PC-3 (cell line): ENCODE measurements at regions of chr17 and their contacts with region 1.

Region 1: DNA sequence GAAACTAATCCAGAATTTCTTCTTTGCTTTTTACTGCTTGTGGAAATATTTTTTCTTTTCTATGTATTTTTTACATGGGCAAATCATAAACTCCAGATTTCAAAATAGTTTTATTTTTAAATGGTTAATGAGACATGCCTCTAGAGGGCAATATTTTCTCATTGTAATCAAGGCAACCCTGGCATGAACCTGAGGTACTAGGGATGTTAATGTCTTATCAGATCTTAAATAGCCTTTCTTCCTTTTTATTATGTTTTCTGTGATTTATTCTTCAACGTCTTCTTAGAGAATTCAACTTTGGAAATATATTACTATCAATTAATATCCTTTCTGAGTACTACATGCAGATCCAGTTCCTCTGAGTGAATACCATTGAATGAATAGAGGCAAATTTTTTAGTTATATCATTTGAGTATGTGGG is 324.7 kb downstream of the BCAS3 start:
- DNase-seq: peak; percentile 81
- ATAC-seq: peak; percentile 42; the same call in 1 of the 2 replicates
- H3K4me3 ChIP-seq: no peak overlapping the region
- H3K27ac ChIP-seq: no peak overlapping the region
- H3K4me1 ChIP-seq: no peaks in the 10 kb centered on the region
- H3K27me3 ChIP-seq: no peaks in the 10 kb centered on the region
- CTCF ChIP-seq: peak; percentile 87

Region 2: DNA sequence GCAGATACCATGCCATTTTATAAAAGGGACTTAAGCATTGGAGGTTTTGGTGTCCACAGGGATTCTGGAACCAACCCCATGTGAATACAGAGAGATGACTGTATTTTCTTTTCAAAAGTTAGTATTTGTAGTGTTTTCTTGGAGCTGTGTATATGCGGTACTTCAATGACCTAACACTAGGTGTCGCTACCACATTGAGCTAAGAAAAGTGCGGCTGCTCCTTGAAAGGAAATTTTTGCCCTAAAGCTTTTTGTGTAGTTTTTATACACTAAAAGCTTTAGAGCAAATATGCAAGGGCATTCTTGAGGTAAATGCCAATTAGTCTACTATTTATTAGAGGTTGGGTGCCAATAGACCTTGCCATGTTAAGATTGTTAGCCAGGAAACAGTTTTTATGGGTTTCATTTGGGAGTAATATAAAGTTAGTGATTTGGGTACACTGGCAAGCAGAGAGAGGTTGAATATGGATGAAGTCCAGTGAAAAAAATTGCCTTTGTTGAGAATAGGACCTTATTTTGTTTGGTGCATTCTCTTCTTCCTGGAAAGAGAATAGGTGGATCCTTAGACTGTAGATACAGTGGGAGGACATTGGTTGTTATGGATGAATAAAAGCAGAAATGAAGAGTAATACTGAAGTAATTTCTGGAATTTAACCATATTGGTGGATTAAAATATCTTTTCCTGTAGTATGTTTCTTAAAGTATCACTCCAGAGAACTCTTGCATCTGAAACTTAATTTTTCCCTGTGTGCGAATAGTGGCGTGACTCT is 281.4 kb before region 1 on chr17:
- CTCF ChIA-PET with region 1: interaction called, 9 read pairs
- POLR2A ChIA-PET with region 1: no interaction called
- intact Hi-C with region 1: loop called (anchors 2 kb)
- DNase-seq: peak; percentile 83
- ATAC-seq: peak; percentile 82
- H3K4me3 ChIP-seq: no peak overlapping the region
- H3K27ac ChIP-seq: no peak overlapping the region
- H3K4me1 ChIP-seq: no peaks in the 10 kb centered on the region; the same call in 1 of the 2 replicates
- H3K27me3 ChIP-seq: no peaks in the 10 kb centered on the region
- CTCF ChIP-seq: peak; percentile 99

Region 3: DNA sequence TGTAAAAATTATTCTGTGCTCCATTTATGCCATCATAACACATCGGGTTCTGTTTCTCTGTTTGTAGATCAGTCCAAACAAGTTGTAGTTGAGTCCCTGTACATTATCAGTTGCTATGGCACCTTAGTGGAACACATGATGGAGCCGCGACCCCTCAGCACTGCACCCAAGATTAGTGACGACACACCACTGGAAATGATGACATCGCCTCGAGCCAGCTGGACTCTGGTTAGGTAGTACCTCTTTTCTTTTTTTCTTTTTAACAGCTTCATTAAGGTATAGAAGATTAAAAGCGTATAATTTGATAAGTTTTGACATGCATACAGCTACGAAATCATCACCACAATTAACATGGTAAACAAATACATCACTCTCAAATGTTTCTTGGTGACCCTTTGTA is 35.5 kb after region 1 on chr17:
- CTCF ChIA-PET with region 1: no interaction called
- POLR2A ChIA-PET with region 1: no interaction called
- intact Hi-C with region 1: no loop called
- DNase-seq: no peak
- ATAC-seq: no peak
- H3K4me3 ChIP-seq: no peak overlapping the region
- H3K27ac ChIP-seq: no peak overlapping the region
- H3K4me1 ChIP-seq: no peaks in the 10 kb centered on the region
- H3K27me3 ChIP-seq: no peaks in the 10 kb centered on the region
- CTCF ChIP-seq: no peak

Region 4: DNA sequence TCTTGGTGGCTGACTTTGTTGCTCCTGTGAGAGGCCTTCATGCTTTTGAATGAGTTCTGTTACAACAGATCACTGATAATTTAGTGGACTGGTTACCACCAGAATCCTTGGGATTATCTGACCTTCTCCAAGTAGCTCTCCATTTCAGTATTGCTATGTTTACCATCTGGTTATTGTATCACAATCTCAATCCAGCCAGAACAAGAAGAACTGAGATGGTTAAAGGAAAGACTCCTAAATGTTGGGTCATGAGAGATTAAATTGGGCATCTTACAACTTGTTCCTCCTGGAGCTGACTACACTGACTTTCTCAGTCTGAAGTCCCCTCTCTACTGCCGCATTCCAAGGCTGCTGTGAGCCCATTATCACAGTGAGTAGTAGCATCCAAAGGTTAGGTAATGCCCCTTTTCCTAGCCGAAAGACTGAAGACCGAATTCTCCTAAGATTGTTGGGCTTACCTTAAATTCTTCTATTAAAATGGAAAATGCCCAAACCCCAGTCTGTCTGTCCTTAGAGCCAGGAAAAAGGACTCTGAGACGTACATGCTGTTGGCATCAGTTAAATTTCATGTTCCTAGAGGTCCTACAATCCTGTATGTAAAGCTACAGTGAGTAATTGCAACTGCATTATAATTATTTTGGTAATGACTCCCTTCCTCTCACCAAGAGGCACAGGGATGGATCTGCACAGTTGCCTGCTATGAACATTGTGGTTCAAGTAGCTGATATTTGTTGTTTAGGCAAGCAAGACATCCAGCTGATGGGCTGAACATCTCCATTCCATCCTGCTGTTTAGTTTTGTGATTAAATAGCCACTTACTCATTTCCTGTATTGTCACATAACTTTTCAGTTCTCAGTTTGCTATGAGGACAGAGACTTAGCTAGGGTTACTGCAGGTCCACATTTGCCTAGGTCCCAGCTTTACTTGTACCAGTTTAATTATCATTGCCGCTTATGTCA is 215.8 kb after region 1 on chr17:
- CTCF ChIA-PET with region 1: no interaction called
- POLR2A ChIA-PET with region 1: no interaction called
- intact Hi-C with region 1: no loop called
- DNase-seq: peak; percentile 65
- ATAC-seq: peak; percentile 98
- H3K4me3 ChIP-seq: no peak overlapping the region
- H3K27ac ChIP-seq: no peak overlapping the region
- H3K4me1 ChIP-seq: peaks cover 13% of the 10 kb centered on the region
- H3K27me3 ChIP-seq: no peaks in the 10 kb centered on the region
- CTCF ChIP-seq: no peak

Region 5: DNA sequence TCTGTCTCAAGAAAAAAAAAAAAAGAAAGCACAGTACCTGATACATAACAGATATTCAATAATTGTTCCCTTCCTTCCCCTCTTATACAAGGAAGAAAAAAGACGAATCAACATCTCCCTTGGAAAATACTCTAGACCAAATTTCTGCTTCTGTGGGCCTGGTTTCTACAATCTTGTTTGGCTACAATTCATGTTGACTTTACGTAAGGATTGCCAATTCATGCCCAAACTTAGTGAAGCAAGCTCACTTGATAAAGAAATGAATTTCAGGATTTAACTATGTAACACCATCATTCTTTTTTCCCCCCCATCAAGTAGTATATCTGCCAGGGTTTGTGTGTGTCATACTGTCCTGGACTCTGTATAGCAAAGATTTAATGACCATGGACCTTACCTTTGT is 263.1 kb after region 1 on chr17:
- CTCF ChIA-PET with region 1: no interaction called
- POLR2A ChIA-PET with region 1: no interaction called
- intact Hi-C with region 1: loop called (anchors 5 kb)
- DNase-seq: no peak
- ATAC-seq: no peak
- H3K4me3 ChIP-seq: no peak overlapping the region
- H3K27ac ChIP-seq: no peak overlapping the region
- H3K4me1 ChIP-seq: no peaks in the 10 kb centered on the region
- H3K27me3 ChIP-seq: no peaks in the 10 kb centered on the region
- CTCF ChIP-seq: no peak

Region 6: DNA sequence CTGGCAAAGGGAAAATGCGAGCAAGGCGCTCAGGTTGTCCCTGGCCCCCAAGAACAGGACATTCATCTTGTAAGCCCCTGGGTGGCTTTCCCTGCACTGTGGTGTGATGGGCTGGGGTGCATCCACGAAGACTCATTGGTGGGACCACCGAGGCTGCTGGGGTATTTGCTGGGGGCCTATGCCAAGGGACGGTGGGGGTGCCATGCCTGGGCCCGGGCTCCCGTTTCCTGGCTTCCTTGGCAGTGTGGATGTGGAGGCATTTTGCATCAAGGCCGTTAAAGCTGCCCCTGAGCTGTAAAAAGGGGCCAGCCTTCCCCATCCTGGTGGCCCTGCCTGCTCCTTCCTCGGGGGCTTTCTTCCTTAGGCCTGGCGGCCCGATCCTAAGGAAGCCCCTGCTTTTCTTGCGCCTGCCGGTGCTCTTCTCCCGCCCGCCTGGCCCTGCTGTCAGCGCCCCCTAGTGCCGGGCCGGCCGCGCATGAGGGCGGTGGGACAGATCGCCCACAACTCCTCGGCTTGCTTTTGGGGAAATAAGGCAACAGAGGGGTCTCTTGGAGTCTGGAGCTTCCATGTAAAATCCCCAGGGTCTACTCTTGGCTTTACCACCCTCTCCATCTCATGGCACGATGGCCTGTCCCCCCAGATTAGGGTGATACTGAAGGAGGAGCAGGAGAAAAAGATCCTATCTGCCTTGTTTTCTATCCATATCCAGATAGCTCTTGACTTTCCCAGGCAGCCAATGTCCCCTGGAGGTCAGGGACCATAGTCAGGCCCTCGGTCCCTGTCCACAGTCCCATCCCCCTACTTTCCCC is 387.5 kb after region 1 on chr17:
- CTCF ChIA-PET with region 1: no interaction called
- POLR2A ChIA-PET with region 1: no interaction called
- intact Hi-C with region 1: loop called (anchors 1 kb)
- DNase-seq: peak; percentile 69
- ATAC-seq: peak; percentile 78
- H3K4me3 ChIP-seq: no peak overlapping the region
- H3K27ac ChIP-seq: no peak overlapping the region
- H3K4me1 ChIP-seq: peaks cover 3% of the 10 kb centered on the region; the same call in 1 of the 2 replicates
- H3K27me3 ChIP-seq: no peaks in the 10 kb centered on the region
- CTCF ChIP-seq: peak; percentile 99

Region 7: DNA sequence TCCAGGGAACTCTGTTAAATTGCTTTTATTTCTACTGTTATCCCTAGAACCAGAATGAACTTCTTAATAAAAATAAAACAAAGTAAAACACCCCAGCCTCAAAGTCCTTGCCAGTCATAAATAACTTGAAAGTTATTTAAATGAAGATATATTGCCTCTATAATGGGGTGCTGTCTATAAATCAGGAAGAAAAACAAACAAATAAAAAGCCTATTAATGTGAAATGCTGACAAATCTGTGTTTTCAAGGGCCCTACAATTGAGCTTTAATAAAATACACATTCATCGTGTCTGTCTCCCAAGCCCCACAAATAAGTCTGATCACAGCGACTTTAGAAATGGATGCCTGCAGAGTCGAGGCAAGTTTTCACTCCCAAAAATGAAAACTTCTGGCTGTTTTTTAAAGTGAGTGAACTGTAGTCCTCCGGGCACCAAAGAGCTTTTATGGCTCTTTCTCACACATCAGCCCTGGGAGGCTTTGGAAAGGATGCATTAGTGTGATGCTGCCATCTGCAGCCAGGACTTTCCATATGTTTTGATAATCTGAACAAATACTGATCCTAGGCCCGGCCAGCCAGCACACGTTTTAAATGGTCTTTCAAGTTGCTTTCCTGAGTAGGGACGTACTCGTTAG is 572.3 kb after region 1 on chr17:
- CTCF ChIA-PET with region 1: no interaction called
- POLR2A ChIA-PET with region 1: no interaction called
- intact Hi-C with region 1: loop called (anchors 2 kb)
- DNase-seq: peak; percentile 89
- ATAC-seq: peak; percentile 97
- H3K4me3 ChIP-seq: peak overlapping the region; percentile 23; the same call in 1 of the 2 replicates
- H3K27ac ChIP-seq: peak overlapping the region; percentile 59
- H3K4me1 ChIP-seq: peaks cover 26% of the 10 kb centered on the region
- H3K27me3 ChIP-seq: no peaks in the 10 kb centered on the region
- CTCF ChIP-seq: peak; percentile 80